Activated CD8-positive, alpha-beta T cell treated with anti-CD3 and anti-CD28 coated beads, Interleukin-2, amount 10 ng/mL, durations not matched to agents 7 days and 5 days (primary cell): ENCODE measurements at regions of chr13 and their contacts with region 1.

Region 1: DNA sequence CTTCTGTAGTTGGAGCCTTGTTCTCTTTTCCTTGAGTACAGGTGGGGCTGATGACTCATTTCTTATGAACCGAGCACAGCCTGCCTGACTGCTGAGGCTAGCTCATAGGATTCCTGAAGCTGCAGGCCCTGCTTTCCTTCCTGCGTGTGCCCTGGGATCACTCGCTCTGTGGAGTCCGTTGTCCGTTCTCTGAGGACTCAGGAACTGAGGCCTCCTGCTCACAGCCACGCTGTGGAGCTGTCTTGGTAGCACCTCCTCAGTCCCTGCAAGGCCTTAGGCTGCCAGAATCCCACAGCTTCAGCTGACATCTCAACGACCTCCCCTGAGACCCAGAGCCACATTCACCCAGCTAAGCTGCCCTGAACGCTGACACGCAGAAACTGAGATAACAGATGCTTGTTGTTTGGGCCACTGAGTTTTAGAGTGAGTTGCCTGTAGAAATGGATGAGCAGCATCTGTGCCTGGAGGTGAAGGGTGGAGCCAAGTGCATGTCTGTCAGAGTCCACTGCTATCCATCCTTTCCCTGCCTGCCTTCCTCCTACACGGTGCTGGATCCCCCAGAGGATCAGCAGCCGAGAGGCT is 72.9 kb downstream of the ARHGEF7 start:
- DNase-seq: no peak
- ATAC-seq: peak; percentile 13
- H3K4me3 Mint-ChIP-seq: peak overlapping the region; percentile 65
- H3K27ac Mint-ChIP-seq: peak overlapping the region; percentile 85
- H3K4me1 Mint-ChIP-seq: peaks cover 87% of the 10 kb centered on the region
- H3K27me3 Mint-ChIP-seq: no peaks in the 10 kb centered on the region

Region 2: GRCh38 chr13:111202745-111203144 is 14.7 kb after region 1 on chr13:
- CTCF ChIA-PET with region 1: interaction called, 10 read pairs
- POLR2A ChIA-PET with region 1: interaction called, 4 read pairs
- DNase-seq: peak; percentile 31
- ATAC-seq: peak; percentile 67
- H3K4me3 Mint-ChIP-seq: no peak overlapping the region
- H3K27ac Mint-ChIP-seq: no peak overlapping the region
- H3K4me1 Mint-ChIP-seq: peaks cover 53% of the 10 kb centered on the region
- H3K27me3 Mint-ChIP-seq: no peaks in the 10 kb centered on the region